Right cardiac atrium (tissue), 5 donors: ENCODE measurements at regions of chr7 and their contacts with region 1.

Region 1: DNA sequence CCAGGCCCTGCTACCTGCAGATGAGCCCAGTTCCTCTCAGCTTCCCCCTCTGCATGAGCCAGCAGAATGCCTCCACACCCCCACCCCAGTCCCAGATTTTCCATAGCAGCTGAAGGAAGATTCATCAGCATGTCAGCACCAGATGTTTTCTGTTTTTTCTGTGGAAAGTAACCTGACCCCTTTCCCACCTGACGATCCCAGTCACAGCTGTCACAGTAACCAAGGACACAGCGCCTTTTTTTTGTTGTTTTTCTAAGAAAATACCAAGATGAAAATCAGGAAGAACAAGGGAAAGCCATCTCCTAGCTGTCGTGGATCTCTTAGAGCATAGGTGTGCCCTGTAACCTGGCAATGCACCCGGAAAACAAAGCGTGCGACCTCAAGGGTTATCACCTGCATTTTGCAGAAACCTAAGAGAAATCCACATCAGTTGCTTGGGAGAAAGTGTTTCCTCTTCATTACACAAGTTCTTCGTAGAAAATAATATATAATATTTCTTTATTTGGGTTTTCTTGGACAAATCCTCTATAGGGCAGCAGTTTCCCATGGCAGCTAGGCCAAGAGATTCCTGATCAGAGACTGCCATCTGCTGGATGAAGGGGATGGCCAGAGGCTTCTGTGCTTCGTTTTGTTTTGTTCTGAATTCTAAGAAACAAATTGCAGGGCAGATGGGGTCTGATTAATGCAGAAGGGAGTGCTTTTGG is 401.9 kb downstream of the TNS3 start:
- DNase-seq: no peak
- ATAC-seq: peak; percentile 65 to 67
- H3K4me3 ChIP-seq: no peak overlapping the region
- H3K27ac ChIP-seq: no peak overlapping the region
- H3K4me1 ChIP-seq: peaks cover 2% of the 10 kb centered on the region
- H3K27me3 ChIP-seq: no peaks in the 10 kb centered on the region

Region 2: GRCh38 chr7:45917658-45918057 is 1262.3 kb before region 1 on chr7:
- intact Hi-C with region 1: loop called (anchors 2 to 10 kb)
- DNase-seq: peak; percentile 82 to 93 (median 91)
- ATAC-seq: peak; percentile 29 to 57
- H3K4me3 ChIP-seq: peak overlapping the region; percentile 9
- H3K27ac ChIP-seq: no peak overlapping the region
- H3K4me1 ChIP-seq: peaks cover 5% of the 10 kb centered on the region
- H3K27me3 ChIP-seq: no peaks in the 10 kb centered on the region

Region 3: DNA sequence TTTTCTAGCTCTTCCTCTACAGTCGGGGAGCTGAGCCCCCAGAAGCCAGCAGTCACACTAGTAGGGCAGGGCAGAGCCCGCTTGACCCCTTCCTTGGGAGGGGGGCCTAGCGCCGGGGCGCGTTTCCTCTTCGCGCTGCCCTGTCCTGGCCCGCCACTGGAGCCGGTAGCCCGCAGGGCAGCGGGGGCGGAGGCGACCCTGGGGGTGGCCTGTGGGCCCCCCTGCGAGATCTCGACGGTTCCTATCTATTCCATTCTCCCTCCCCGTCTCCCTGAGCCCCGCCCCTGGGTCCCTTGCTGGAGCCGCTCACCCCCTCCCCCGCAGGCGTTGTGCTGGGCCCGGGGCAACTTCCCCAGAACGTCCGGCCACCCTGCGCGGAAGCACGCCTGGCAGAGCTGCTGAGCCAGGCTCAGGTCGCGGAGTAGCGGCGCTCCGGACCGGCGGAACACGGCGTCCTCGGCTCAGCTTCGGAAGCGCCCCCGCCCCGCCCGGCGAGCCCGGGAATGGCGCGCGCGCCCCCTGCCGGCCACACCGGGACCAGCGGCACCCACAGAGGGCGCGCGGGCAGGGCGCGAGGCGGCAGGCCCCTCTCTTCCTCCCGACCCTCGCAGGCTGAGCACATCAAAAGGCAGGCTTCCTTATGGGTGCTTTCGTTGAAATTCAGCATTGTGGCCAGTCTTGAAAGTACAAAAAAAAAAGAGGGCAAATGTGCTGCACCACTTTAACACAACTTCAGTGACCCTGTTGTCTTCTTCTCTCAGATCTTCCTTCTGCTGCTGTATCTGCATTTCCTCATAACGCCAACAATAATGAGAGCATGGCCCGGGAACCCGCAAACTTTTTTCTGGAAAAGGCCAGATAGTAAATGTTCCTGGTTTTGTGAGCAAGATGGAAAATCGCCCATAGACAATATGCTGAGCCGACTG is 74.4 kb after region 1 on chr7:
- intact Hi-C with region 1: loop called in 1 of 4 experiments (anchors 10 kb)
- DNase-seq: peak; percentile 87 to 97 (median 95)
- ATAC-seq: peak; percentile 96
- H3K4me3 ChIP-seq: peak overlapping the region; percentile 60
- H3K27ac ChIP-seq: peak overlapping the region; percentile 90
- H3K4me1 ChIP-seq: no peaks in the 10 kb centered on the region
- H3K27me3 ChIP-seq: no peaks in the 10 kb centered on the region